Prostate gland (tissue), 2 donors: ENCODE measurements at regions of chr17 and their contacts with region 1.

Region 1: GRCh38 chr17:68759343-68760132 is 158.4 kb upstream of the FAM20A start:
- DNase-seq: peak; percentile 75
- H3K4me3 ChIP-seq: peak overlapping the region; percentile 4 to 7
- H3K27ac ChIP-seq: peak overlapping the region; percentile 1 to 49
- H3K4me1 ChIP-seq: no peaks in the 10 kb centered on the region
- H3K27me3 ChIP-seq: no peaks in the 10 kb centered on the region
- CTCF ChIP-seq: peak; percentile 45 to 89 (median 79)
- POLR2A ChIP-seq: no peak

Region 2: GRCh38 chr17:68172461-68172954 is 587.0 kb before region 1 on chr17:
- intact Hi-C with region 1: loop called (anchors 10 kb)
- DNase-seq: peak; percentile 68
- H3K4me3 ChIP-seq: no peak overlapping the region
- H3K27ac ChIP-seq: no peak overlapping the region
- H3K4me1 ChIP-seq: no peaks in the 10 kb centered on the region
- H3K27me3 ChIP-seq: no peaks in the 10 kb centered on the region
- CTCF ChIP-seq: peak; percentile 81 to 94 (median 88)
- POLR2A ChIP-seq: no peak

Region 3: GRCh38 chr17:68533887-68534694 is 225.4 kb before region 1 on chr17:
- intact Hi-C with region 1: loop called (anchors 5 kb)
- DNase-seq: no peak
- H3K4me3 ChIP-seq: no peak overlapping the region
- H3K27ac ChIP-seq: no peak overlapping the region
- H3K4me1 ChIP-seq: no peaks in the 10 kb centered on the region
- H3K27me3 ChIP-seq: no peaks in the 10 kb centered on the region
- CTCF ChIP-seq: peak in 2 of 4 experiments; percentile 38 to 51
- POLR2A ChIP-seq: no peak

Region 4: DNA sequence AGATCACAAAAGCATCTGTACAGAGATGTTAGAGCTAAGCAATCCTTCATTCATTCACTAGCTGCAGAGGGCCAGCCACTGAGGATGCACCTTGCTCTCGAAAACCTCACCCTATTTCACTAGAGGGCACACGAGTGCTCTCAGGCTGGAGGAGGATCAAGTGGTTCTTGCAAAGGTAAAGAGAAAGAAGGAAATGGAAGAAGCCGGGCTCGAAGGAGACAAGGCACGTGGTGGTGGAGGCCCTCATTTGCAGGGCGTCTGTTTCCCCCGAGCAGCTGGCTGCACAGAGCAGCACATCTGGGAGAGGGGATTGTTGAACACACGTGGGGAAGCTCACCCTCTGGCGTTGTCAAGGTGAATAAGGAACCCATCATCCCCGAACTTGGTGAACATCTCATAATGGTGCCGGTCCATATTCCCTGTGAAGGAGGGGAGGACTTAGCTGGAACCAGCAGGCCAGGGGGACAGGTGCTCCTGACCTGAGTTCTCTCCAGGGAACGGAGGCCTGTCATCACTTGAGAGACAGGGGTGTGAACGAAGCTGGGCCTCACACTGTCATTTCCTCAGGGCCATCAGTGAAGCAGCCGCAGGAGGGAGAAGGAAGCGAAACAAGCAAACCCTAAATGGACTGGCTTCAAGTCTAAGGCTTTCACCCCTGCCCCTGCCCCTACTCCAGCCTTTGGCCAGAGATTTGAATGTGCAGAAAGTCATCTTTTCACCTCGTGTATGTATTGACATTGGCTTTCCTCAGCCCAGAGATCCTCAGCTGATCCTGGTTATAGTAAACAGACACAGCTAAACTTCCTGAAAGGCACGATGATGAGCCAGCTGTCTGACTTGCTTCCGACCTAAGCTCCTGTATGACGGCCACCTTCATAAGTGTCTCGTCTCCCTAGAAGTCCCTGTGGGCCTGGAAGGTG is 219.7 kb before region 1 on chr17:
- intact Hi-C with region 1: loop called (anchors 5 kb)
- DNase-seq: no peak
- H3K4me3 ChIP-seq: no peak overlapping the region
- H3K27ac ChIP-seq: no peak overlapping the region
- H3K4me1 ChIP-seq: no peaks in the 10 kb centered on the region
- H3K27me3 ChIP-seq: no peaks in the 10 kb centered on the region
- CTCF ChIP-seq: peak in 2 of 4 experiments; percentile 24 to 34
- POLR2A ChIP-seq: no peak

Region 5: DNA sequence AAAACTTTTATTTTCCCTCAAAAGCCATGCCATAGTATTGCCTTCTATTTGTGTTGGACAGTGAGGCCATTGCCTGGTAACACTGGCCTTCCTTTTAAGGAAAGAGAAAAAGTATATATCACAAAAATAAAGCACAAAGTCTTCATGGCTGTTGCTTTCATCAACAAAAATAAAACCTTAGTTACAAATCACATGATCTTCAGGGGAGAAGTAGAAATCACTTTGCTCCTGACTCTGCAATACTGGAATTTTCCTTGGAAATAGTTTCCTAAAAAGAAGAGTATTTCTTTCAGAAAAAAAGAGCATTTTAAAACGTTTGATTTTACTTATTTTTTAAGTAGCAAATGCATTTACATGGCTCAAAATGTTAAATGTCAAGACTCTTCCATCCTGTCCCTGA is 200.2 kb before region 1 on chr17:
- intact Hi-C with region 1: no loop called
- DNase-seq: no peak
- H3K4me3 ChIP-seq: no peak overlapping the region
- H3K27ac ChIP-seq: no peak overlapping the region
- H3K4me1 ChIP-seq: no peaks in the 10 kb centered on the region
- H3K27me3 ChIP-seq: no peaks in the 10 kb centered on the region
- CTCF ChIP-seq: no peak
- POLR2A ChIP-seq: no peak